HepG2 (cell line): ENCODE measurements at regions of chr5 and their contacts with region 1.

Region 1: DNA sequence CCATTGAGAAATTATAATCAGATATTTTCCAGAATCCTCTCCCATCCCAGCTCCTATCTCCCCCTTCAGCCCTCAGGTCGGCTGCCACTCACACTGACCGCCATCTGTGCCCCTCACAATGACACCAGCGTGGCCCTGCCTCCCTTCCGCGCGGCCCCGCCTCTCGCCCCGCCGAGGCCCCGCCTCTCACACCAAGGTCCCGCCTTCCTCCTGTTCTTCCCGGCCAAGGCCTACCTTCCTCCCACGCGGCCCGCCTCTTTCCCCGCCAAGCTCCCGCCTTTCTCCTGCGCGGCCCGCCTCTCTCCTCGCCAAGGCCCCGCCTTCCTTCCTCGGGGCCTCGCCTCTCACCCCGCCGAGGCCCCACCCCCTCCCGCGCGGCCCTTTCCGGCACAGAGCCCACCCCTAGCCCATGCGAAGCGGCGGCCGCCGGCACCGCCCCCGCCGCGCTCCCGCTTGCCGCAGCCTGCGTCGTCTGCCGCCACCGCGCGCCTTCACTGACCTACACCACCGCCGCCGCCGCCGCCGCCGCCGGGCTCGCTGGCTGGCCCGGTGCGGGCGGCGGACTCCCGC is at the start of gene DNAJC21:
- DNase-seq: peak; percentile 92
- ATAC-seq: peak; percentile 93
- H3K4me3 ChIP-seq: peak within 1 kb of the TSS; percentile 91 to 99 (median 96)
- H3K27ac ChIP-seq: peak within 1 kb of the TSS; percentile 92
- H3K4me1 ChIP-seq: peaks cover 19% of the 10 kb centered on the region
- H3K27me3 ChIP-seq: no peaks in the 10 kb centered on the region; a peak in 1 of 5 replicates
- CTCF ChIP-seq: no peak
- EP300 ChIP-seq: no peak
- POLR2A ChIP-seq: peak; percentile 49 to 59; a peak in 3 of 4 replicates
- RAD21 ChIP-seq: 0 out of 2 replicates have a peak, but pooled peaks have one; percentile 4
- total RNA-seq, gene DNAJC21: 41.6 and 46.4 TPM in 2 replicates

Region 2: GRCh38 chr5:34941936-34942335 is 12.7 kb after region 1 on chr5:
- CTCF ChIA-PET with region 1: no interaction called
- POLR2A ChIA-PET with region 1: interaction called, 16 read pairs
- in situ Hi-C with region 1: no loop called
- intact Hi-C with region 1: no loop called
- DNase-seq: no peak
- ATAC-seq: no peak
- H3K4me3 ChIP-seq: no peak overlapping the region
- H3K27ac ChIP-seq: no peak overlapping the region
- H3K4me1 ChIP-seq: no peaks in the 10 kb centered on the region
- H3K27me3 ChIP-seq: no peaks in the 10 kb centered on the region
- CTCF ChIP-seq: no peak
- EP300 ChIP-seq: no peak
- POLR2A ChIP-seq: no peak
- RAD21 ChIP-seq: no peak

Region 3: GRCh38 chr5:35089334-35090314 is 160.4 kb after region 1 on chr5:
- CTCF ChIA-PET with region 1: no interaction called
- POLR2A ChIA-PET with region 1: no interaction called
- in situ Hi-C with region 1: no loop called
- intact Hi-C with region 1: no loop called
- DNase-seq: peak; percentile 64
- ATAC-seq: peak; percentile 85
- H3K4me3 ChIP-seq: no peak overlapping the region
- H3K27ac ChIP-seq: no peak overlapping the region
- H3K4me1 ChIP-seq: peaks cover 13% of the 10 kb centered on the region
- H3K27me3 ChIP-seq: no peaks in the 10 kb centered on the region
- CTCF ChIP-seq: peak; percentile 89
- EP300 ChIP-seq: no peak
- POLR2A ChIP-seq: no peak
- RAD21 ChIP-seq: peak; percentile 93